WTC11 (cell line): ENCODE measurements at regions of chr15 and their contacts with region 1.

Region 1: DNA sequence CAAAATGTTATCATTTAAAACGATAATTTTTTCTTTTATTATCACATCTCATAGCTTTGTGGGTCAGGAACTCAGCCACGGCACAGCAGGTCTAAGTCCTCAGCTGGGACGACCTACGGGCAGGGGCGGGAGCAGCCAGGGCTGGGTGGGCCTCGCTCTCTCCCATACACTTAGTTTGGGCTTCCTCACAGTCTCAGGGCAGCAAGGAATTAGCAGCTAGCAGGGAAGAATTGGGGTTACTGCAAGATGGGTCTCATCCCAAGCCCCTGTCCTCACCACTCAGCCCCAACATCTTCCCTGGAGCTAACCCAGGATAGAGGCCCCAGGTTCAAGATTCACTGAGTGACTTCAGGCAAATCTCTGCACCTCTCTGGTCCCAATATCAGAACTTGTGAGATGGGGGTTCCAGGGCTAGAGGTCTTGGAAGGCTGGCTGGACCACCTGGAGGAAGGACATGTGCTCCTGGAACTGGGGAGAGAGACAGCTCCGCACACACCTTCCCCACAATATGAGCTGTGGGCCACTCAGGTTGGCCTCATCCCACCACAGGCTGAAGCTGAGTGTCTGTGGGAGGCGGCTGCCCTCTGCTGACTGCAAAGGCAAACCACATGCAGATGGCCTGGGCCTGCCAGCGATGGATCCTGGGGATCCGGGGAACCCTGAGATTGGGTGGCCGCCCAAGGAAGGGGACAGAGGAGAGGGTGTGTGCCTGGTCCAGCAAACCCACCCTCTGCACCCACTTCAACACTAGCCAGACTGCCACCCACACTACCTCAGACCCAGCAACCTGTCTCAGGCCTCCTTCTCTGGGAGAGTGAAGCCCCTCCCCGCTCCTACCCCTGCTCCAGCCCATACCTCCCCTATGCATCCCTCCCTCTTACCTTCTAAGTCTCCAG is 45.0 kb downstream of the CYP11A1 start:
- DNase-seq: peak; percentile 85
- ATAC-seq: peak; percentile 68
- H3K4me3 Mint-ChIP-seq: no peak overlapping the region
- H3K27ac Mint-ChIP-seq: no peak overlapping the region
- H3K4me1 Mint-ChIP-seq: peaks cover 43% of the 10 kb centered on the region
- H3K27me3 Mint-ChIP-seq: no peaks in the 10 kb centered on the region; the same call in none of the 2 replicates
- CTCF ChIP-seq: peak; percentile 66

Region 2: DNA sequence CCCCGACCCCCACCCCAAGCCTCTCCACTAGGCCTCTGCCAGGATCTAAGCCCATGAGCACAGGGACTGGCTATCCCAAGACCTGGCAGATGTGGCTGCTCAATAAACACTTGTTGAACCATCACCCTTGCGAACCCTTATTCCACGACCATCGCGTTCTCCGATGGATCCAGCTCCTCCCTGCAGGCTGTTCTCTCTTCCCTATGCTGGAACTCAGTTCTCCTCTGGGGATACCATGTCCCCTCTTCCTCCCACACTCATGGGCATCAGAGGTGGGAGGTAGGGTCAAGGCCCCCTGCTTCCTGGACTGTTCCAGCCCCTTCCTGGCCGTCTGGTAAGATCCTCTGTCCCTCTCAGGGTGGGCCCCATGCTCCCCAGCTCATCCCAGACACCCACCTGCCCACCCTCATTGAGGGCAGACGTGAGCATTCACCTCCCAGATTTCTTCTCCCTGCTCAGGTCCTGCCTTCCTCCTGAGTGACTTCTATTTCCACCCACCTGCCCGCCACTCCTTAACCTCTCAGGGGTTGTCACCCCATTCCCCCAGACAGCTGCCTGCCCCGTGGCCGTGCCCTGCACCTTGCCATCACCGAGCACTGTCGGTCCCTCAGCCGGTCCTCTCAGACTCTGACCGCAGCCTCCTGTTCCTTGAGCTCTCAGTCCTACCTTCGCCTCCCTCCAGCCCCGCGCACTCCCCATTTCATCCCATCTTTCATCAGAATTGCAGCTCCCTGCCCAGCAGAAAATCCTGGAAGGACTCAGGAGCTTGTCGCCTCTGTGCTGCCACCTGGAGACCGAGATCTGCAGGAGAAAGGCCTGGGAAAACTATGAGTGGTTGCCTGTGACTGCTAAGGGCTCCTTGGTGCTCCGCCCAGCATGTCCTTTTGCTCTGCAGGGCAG is 285.9 kb before region 1 on chr15:
- CTCF ChIA-PET with region 1: interaction called, 13 read pairs
- POLR2A ChIA-PET with region 1: no interaction called
- DNase-seq: peak; percentile 86
- ATAC-seq: peak; percentile 86
- H3K4me3 Mint-ChIP-seq: no peak overlapping the region
- H3K27ac Mint-ChIP-seq: peak overlapping the region; percentile 31
- H3K4me1 Mint-ChIP-seq: peaks cover 39% of the 10 kb centered on the region
- H3K27me3 Mint-ChIP-seq: no peaks in the 10 kb centered on the region
- CTCF ChIP-seq: peak; percentile 29; the same call in 1 of the 2 replicates

Region 3: DNA sequence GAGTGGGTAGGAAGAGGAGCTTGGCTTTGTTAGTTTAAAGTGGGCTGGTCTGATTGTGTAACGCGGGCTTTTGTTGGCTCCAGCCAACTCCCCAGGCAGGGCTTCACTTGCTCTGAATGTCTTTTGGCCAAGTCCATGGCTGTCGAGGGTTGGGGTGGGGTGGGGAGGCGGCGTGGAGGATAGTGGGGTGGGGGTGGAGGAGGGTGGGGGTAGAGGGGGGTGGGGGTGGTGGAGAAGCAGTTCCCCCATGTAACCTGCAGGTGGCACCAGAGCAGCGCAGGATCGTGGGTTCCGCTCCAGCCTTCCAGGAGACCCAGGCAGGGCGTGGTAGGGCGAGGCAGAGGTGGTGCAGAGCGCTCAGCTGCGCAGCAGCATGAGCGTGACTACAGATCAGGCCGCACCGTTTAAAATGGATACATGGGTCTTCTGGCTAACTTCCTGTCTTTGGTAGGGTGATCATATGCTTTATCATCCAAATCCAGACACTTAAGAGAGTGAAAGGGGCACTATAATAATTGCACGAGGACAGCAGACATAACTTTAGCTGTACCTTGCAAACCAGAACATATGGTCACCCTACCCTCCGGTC is 268.4 kb before region 1 on chr15:
- CTCF ChIA-PET with region 1: interaction called, 111 read pairs
- POLR2A ChIA-PET with region 1: no interaction called
- DNase-seq: peak; percentile 82
- ATAC-seq: peak; percentile 97
- H3K4me3 Mint-ChIP-seq: no peak overlapping the region
- H3K27ac Mint-ChIP-seq: no peak overlapping the region
- H3K4me1 Mint-ChIP-seq: peaks cover 17% of the 10 kb centered on the region
- H3K27me3 Mint-ChIP-seq: peaks cover 21% of the 10 kb centered on the region
- CTCF ChIP-seq: peak; percentile 73

Region 4: GRCh38 chr15:74134387-74135027 is 187.9 kb before region 1 on chr15:
- CTCF ChIA-PET with region 1: interaction called, 94 read pairs
- POLR2A ChIA-PET with region 1: no interaction called
- DNase-seq: peak; percentile 84
- ATAC-seq: peak; percentile 43
- H3K4me3 Mint-ChIP-seq: peak overlapping the region; percentile 67
- H3K27ac Mint-ChIP-seq: no peak overlapping the region
- H3K4me1 Mint-ChIP-seq: peaks cover 65% of the 10 kb centered on the region
- H3K27me3 Mint-ChIP-seq: peaks cover 98% of the 10 kb centered on the region
- CTCF ChIP-seq: peak; percentile 62

Region 5: GRCh38 chr15:74222240-74223119 is 99.9 kb before region 1 on chr15:
- CTCF ChIA-PET with region 1: interaction called, 10 read pairs
- POLR2A ChIA-PET with region 1: no interaction called
- DNase-seq: no peak
- ATAC-seq: no peak
- H3K4me3 Mint-ChIP-seq: peak overlapping the region; percentile 49
- H3K27ac Mint-ChIP-seq: no peak overlapping the region
- H3K4me1 Mint-ChIP-seq: peaks cover 54% of the 10 kb centered on the region
- H3K27me3 Mint-ChIP-seq: peaks cover 90% of the 10 kb centered on the region
- CTCF ChIP-seq: no peak

Region 6: DNA sequence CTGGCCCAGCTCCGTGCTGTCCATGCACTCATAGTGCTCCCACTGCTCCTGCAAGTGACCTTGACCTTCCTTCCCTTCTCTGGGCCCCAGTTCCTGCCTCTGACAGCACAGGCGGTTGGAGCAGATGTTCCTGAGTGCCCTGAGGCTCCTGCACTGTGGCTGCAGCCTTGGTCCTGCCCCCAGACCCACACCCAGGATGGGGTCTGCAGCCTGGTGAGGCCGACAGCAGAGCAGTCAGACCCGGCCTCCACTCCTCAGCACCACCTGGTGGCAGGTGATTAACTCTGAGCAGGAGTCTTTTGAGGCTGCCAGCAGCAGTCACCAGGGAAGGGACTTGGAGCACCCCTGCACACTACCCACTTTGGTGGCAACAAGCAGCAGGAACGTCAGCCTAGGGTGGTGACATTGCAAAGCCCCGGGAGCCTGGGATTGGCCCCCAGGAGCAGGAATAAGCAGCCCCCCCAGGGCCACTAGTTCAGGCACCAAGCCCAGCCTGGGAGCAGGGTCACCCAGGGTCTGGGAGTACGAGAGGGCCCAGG is 19.5 kb before region 1 on chr15:
- CTCF ChIA-PET with region 1: interaction called, 347 read pairs
- POLR2A ChIA-PET with region 1: interaction called, 3 read pairs
- DNase-seq: peak; percentile 86
- ATAC-seq: peak; percentile 67
- H3K4me3 Mint-ChIP-seq: peak overlapping the region; percentile 37
- H3K27ac Mint-ChIP-seq: no peak overlapping the region
- H3K4me1 Mint-ChIP-seq: peaks cover 79% of the 10 kb centered on the region
- H3K27me3 Mint-ChIP-seq: peaks cover 57% of the 10 kb centered on the region
- CTCF ChIP-seq: peak; percentile 80